ENCODE measurements at regions of chr12 and their contacts with region 1.

Region 1: DNA sequence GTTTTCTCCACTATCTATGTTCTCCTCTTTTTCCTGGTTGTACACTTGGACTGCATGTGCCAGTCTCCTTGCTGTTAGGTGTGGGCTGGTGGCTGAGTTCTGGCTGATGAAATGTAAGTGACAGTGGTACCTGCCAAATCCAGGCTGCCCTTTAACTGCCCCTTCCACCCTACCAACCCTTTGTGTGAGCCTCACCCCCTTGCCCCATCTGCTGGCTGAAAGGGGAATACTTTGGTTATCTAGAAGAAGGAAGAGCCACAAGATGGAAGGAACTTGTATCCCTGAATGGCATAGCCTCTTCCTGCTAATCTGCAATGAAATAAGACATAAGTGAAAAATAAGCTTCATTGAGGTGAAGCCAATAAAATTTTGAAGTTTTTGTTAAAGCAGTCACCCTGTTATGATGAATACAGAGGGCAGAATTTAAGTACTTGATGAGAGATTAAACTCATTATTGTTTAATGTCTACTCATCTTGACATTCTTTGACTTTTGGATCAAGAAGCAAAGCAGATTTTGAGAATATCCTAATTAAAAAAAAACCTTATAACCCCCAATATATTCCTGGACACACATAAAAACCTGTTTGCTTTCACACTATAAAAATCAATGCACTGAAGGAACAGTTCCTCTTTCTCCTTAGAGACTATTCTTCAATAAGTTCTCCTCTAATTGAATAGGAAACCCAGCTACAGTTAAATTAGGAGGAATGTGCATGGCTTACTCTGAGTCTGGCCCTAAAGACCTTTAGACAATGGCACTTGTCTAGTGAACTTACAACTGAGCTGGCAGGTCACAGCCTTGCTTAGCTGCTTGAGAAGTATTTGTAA is 262.6 kb upstream of the BTG1 start:
- DNase-seq: peak; percentile 55
- H3K4me3 ChIP-seq: no peak overlapping the region; a peak in 1 of 4 replicates
- H3K27ac ChIP-seq: no peak overlapping the region
- H3K4me1 ChIP-seq: peaks cover 0 to 9% of the 10 kb centered on the region in 2 experiments; a peak in 1 of 4 replicates
- H3K27me3 ChIP-seq: no peaks in the 10 kb centered on the region
- CTCF ChIP-seq: peak; percentile 61
- EP300 ChIP-seq: no peak
- RAD21 ChIP-seq: peak; percentile 70

Region 2: GRCh38 chr12:92389466-92389865 is 18.8 kb before region 1 on chr12:
- CTCF ChIA-PET with region 1: no interaction called
- POLR2A ChIA-PET with region 1: no interaction called
- DNase-seq: no peak
- H3K4me3 ChIP-seq: no peak overlapping the region
- H3K27ac ChIP-seq: no peak overlapping the region
- H3K4me1 ChIP-seq: no peaks in the 10 kb centered on the region
- H3K27me3 ChIP-seq: no peaks in the 10 kb centered on the region
- CTCF ChIP-seq: no peak
- EP300 ChIP-seq: no peak
- RAD21 ChIP-seq: no peak

Region 3: DNA sequence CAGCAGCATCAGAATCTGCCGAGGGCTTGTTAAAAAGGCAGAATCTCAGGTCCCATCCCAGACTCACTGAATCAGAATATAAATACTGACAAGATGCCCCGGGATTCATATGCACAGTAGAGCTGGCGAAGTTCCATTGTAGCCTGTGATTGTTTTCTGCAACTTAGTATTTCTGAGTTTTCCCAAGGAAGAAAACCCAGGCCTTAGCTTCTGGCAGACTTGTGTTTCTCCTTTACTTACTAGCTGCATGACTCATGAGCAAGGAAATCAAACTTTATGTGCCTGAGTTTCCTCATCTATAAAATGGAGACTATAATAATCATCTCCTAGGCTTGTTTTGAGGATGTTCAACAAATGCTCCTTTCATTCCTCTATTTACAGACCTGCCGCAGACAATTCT is 16.1 kb after region 1 on chr12:
- CTCF ChIA-PET with region 1: interaction called, 11 read pairs
- POLR2A ChIA-PET with region 1: no interaction called
- DNase-seq: no peak
- H3K4me3 ChIP-seq: no peak overlapping the region
- H3K27ac ChIP-seq: no peak overlapping the region
- H3K4me1 ChIP-seq: no peaks in the 10 kb centered on the region
- H3K27me3 ChIP-seq: no peaks in the 10 kb centered on the region
- CTCF ChIP-seq: no peak
- EP300 ChIP-seq: no peak
- RAD21 ChIP-seq: no peak